HAP-1 (cell line): ENCODE measurements at regions of chr3 and their contacts with region 1.

Region 1: DNA sequence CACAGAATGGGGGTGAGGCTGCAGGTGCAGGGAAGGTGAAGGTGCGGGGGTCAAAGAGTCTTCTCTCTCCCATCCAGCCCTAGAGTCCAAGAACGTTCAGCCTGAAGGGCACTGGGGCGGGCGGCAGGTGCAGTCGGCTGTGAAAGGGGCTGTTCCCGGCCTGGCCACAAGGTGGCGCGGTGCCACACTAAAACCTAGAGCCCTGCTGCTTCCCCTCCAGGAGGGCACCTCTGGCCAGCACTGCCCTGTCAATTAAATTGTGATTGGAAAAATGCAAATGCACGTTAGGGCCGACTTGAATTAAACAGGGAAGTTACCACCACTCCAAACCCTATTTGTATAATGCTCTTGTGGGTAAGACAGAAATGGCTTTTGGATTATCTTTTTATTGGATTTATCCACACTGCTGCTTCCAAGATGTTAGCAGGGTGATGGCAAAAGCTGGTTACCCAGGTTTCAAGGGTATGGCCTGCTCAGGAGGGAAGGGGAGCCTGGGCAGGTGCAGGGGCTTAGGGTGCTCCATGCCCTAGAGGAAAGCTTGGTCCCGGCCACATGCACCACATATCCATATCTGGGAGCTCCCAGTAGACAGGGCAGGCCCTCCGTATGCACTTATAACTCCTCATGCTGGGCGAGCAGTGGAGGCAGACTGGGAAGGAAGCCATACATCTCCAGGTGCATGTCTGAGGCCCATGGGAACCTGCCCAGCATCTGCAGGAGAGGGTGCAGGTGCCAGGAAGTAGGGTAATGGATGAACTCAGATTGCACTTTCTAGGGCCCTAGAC is 119.8 kb downstream of the ADCY5 start:
- DNase-seq: peak; percentile 23 to 88
- H3K4me3 ChIP-seq: no peak overlapping the region
- H3K4me1 ChIP-seq: no peaks in the 10 kb centered on the region
- H3K27me3 ChIP-seq: peaks cover 3% of the 10 kb centered on the region; the same call in 1 of the 2 replicates

Region 2: DNA sequence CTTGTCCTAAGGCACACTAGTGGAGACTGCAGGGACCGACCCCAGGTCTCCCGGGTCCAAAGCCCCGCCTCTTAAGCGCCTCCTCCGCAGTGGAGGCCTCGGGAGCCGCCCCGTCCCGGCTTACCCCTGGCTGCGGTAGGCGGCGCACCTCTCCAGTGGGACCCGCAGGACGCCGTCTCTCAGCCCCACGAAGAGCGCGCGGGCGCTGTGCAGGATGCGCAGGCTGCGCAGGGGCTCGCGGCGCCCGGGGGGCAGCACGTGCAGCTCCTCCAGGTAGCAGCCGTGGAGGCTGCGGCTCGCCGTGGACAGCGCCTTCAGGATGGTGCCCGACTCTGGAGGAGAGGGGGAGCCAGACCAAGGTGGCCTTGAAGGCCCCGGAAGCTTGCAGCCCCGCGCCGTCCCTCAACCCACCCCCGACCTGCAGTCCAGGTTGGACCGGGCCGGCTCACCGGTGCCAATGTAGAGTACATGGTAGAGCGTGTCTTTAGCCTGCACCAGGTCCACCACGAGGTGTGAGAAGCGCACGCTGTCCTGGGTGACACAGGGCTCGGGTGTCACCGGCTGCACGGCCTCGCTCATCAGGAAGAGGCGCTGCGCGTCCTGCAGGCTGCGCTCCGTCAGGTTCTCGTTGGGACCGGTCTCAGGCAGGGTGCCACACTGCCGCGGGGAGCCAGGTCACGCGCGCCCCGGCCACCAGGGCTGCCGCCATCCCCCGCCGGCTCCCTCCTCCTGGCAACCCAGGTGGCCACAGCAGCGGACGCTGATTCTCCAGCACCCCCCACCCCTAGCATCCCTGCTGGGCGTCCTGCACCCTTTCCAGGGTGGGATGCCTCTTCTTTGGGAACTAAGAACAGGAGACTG is 407.0 kb before region 1 on chr3:
- in situ Hi-C with region 1: no loop called
- DNase-seq: peak; percentile 45 to 85
- H3K4me3 ChIP-seq: peak overlapping the region; percentile 32
- H3K4me1 ChIP-seq: peaks cover 3% of the 10 kb centered on the region; the same call in 1 of the 2 replicates
- H3K27me3 ChIP-seq: peaks cover 9% of the 10 kb centered on the region; the same call in 1 of the 2 replicates

Region 3: DNA sequence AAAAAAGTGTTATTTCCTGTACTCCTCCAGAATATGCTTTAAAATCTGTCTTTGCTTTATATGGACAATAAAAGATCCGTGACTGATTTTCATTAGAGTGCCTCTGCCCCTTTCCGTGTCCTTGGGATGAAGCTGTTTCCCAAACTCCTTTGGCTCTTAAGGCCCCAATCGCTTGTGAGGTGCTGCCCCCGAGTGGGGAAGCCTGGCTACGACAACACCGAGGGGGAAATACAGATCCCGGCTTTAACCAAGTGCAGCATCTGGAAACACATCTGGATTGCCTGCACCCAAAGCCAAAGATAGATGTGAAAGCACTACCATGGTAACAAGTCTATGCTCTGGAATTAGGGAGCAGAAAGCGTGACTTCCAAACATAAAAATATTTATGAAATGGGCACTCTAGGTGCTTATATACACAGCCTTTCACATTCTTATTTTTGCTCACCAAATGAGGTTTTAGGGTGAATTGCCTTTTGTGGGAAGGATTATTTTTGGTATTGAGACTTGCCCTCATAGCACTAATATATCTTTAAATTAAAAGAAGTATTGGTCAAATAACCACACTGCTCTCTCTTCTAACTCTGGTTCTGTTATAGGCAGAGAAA is 160.5 kb after region 1 on chr3:
- in situ Hi-C with region 1: loop called (anchors 5 kb)
- DNase-seq: peak; percentile 47 to 82
- H3K4me3 ChIP-seq: no peak overlapping the region
- H3K4me1 ChIP-seq: peaks cover 5% of the 10 kb centered on the region; the same call in 1 of the 2 replicates
- H3K27me3 ChIP-seq: no peaks in the 10 kb centered on the region

Region 4: DNA sequence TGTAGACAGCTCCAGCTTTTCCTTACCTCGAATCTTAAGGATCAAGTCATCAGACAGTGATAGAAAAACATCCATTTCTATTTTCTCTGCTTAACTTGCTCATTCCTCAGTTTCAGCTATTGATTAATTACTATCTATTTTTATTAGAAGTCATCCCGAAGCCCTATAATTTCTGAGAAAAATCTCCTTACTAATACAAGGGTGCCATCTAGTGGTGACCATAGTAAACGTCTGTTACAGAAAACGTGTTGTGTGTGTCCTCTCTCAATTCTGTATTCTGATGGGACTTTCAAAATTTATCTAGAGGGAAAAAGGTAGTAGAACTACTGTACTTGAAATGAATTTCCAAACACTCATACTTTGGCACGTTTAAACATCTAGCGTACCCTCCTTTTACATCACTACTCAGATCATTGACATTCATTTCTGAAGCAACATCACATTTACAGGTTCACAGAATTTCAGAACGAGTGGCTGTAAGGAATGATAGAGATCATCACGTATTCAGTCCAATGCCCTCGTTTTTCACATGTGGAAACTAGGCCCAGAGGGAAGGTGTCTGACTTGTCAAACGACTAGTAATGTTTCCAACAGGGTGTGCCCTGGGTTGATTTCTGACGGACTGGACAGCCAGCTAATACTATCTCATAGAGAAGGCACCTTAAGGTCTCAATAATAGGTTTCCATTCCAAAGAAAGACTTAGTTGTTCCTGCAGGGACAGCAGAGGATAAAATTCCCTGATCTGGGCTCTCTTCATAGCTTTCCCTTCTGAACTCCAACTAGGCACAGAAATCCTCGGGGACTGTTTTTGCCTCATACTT is 230.2 kb after region 1 on chr3:
- in situ Hi-C with region 1: loop called (anchors 5 kb)
- DNase-seq: peak; percentile 40 to 52
- H3K4me3 ChIP-seq: no peak overlapping the region
- H3K4me1 ChIP-seq: no peaks in the 10 kb centered on the region
- H3K27me3 ChIP-seq: no peaks in the 10 kb centered on the region